ENCODE measurements at regions of chr13 and their contacts with region 1.

Region 1: GRCh38 chr13:101942038-101942437 is 459.8 kb downstream of the FGF14 start:
- DNase-seq: peak; percentile 43
- H3K4me3 ChIP-seq: no peak overlapping the region
- H3K27ac ChIP-seq: no peak overlapping the region
- H3K4me1 ChIP-seq: no peaks in the 10 kb centered on the region
- H3K27me3 ChIP-seq: no peaks in the 10 kb centered on the region
- CTCF ChIP-seq: peak; percentile 90 to 97

Region 2: GRCh38 chr13:101785858-101786257 is 156.2 kb before region 1 on chr13:
- CTCF ChIA-PET with region 1: no interaction called
- dilution Hi-C with region 1: no loop called
- in situ Hi-C with region 1: no loop called
- intact Hi-C with region 1: loop called (anchors 1 kb)
- DNase-seq: peak; percentile 32
- H3K4me3 ChIP-seq: no peak overlapping the region
- H3K27ac ChIP-seq: no peak overlapping the region
- H3K4me1 ChIP-seq: no peaks in the 10 kb centered on the region
- H3K27me3 ChIP-seq: no peaks in the 10 kb centered on the region
- CTCF ChIP-seq: peak; percentile 19 to 46

Region 3: DNA sequence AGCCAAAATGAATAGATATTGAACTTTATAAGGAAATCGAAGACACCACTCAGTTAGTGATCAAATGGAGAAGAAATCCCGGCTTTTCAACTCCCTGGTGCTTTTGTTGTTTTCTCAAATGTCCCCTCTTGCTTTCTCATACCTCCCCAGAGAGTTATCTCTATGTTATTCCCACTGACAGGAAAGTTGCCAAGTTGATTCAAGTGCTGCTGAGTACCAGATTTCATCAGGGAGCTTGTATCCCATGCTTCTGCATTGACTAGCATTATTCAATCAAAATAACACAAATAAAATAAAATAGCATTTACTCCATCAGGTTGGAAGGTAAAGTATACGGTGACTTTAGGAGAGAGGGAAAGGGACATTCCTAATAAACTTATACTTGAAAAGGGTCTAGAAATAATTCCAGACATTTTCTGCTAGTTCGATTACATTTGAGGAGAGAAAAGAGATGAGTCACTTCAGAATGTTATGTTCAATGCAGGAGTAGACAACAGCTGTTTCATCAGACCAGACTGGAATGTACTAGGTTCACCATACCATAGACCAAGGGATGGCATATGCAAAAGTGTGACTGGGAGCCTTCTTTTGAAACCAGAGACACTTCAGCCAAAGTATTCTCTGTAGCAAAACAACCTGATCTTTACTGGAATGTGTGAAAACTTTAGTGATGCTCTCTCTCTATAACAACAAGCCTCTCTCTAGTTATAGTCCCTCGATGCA is 62.0 kb after region 1 on chr13:
- CTCF ChIA-PET with region 1: no interaction called
- dilution Hi-C with region 1: no loop called
- in situ Hi-C with region 1: no loop called
- intact Hi-C with region 1: no loop called
- DNase-seq: no peak
- H3K4me3 ChIP-seq: no peak overlapping the region
- H3K27ac ChIP-seq: no peak overlapping the region
- H3K4me1 ChIP-seq: no peaks in the 10 kb centered on the region
- H3K27me3 ChIP-seq: no peaks in the 10 kb centered on the region
- CTCF ChIP-seq: no peak

Region 4: DNA sequence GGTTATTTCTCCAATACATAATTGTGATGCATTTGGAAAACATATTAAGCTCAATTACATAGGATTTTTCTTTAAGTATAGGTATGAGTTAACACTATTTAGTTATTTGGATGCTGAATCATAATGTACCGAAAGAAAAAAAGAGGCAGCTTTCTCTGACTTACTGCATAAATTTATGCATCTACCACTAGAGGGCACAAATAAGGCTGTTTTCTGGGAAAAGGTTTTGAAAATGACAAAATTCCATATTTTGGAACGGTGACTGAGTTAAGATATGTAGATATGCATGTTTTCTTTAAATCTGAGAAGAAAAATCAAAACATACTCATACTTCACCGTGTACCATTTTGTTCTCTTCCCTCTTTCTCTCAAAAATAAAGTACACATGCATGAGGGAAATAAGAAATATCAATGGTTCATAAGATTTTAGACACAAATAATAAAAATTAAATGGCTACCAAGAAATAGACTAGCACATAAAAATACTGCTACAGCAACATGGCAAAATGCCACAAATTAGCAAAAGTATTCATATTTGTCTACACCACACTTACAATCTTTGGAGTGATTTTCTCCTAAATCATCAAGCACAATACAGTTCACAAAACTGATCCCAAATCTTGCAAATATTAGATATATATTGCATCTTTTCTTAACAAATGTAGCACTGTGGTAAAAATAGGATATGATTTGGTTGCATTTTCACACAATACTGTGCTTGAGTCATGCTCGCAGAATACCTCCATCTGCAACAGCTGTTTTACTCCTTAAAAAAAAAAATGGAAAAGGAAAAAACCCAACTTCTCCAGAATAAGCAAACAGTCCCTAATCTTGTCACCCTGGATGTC is 199.8 kb after region 1 on chr13:
- CTCF ChIA-PET with region 1: no interaction called
- dilution Hi-C with region 1: no loop called
- in situ Hi-C with region 1: no loop called
- intact Hi-C with region 1: loop called (anchors 10 kb)
- DNase-seq: no peak
- H3K4me3 ChIP-seq: no peak overlapping the region
- H3K27ac ChIP-seq: no peak overlapping the region
- H3K4me1 ChIP-seq: no peaks in the 10 kb centered on the region
- H3K27me3 ChIP-seq: no peaks in the 10 kb centered on the region
- CTCF ChIP-seq: peak; percentile 79 to 91

Region 5: DNA sequence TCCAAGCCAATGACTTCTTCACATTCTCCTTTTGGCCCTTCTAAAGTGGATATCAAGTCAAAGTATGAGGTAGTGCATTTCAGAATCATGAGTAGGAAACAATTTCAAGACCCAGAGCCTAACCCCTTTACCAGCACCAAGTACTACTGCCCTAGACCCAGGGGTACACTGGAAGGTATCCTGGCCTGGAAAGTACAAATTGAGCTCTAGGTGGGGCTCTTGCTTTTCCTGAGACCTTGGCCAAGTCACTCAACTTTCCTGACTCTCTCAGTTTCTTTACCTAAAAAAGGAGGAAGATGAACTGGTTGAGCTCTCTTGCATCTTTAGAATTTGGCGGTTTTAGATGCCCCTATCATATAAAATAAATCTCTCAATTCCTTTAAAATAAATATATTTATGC is 255.2 kb after region 1 on chr13:
- CTCF ChIA-PET with region 1: no interaction called
- dilution Hi-C with region 1: no loop called
- in situ Hi-C with region 1: no loop called
- intact Hi-C with region 1: loop called (anchors 1 kb)
- DNase-seq: peak; percentile 30
- H3K4me3 ChIP-seq: no peak overlapping the region
- H3K27ac ChIP-seq: no peak overlapping the region
- H3K4me1 ChIP-seq: peaks cover 43% of the 10 kb centered on the region
- H3K27me3 ChIP-seq: no peaks in the 10 kb centered on the region
- CTCF ChIP-seq: peak; percentile 48 to 65

Region 6: GRCh38 chr13:102460801-102461200 is 518.8 kb after region 1 on chr13:
- CTCF ChIA-PET with region 1: no interaction called
- dilution Hi-C with region 1: no loop called
- in situ Hi-C with region 1: no loop called
- intact Hi-C with region 1: loop called (anchors 1 kb)
- DNase-seq: no peak
- H3K4me3 ChIP-seq: no peak overlapping the region
- H3K27ac ChIP-seq: no peak overlapping the region
- H3K4me1 ChIP-seq: no peaks in the 10 kb centered on the region
- H3K27me3 ChIP-seq: no peaks in the 10 kb centered on the region
- CTCF ChIP-seq: no peak

Region 7: DNA sequence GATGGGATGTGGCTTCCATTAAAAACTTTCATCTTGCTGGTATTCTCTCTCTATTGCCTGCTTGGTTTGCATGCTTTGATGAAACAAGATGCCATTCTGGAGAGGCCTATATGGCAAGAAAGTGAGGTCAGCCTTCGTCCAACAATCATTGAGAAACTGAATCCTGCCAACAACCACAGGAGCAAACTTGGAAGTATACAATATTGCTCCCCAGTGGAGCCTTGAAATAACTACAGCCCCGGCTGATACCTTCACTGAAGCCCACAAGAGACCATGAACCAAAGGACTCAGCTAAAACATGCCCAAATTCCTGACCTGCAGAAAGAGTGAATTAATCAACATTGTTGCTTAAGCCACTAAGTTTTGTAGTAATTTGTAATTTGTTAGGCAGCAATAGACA is 542.3 kb after region 1 on chr13:
- CTCF ChIA-PET with region 1: no interaction called
- dilution Hi-C with region 1: no loop called
- in situ Hi-C with region 1: loop called in 1 of 2 experiments (anchors 25 kb)
- intact Hi-C with region 1: no loop called
- DNase-seq: peak; percentile 17
- H3K4me3 ChIP-seq: no peak overlapping the region
- H3K27ac ChIP-seq: no peak overlapping the region
- H3K4me1 ChIP-seq: no peaks in the 10 kb centered on the region
- H3K27me3 ChIP-seq: no peaks in the 10 kb centered on the region
- CTCF ChIP-seq: peak; percentile 24 to 34

Region 8: DNA sequence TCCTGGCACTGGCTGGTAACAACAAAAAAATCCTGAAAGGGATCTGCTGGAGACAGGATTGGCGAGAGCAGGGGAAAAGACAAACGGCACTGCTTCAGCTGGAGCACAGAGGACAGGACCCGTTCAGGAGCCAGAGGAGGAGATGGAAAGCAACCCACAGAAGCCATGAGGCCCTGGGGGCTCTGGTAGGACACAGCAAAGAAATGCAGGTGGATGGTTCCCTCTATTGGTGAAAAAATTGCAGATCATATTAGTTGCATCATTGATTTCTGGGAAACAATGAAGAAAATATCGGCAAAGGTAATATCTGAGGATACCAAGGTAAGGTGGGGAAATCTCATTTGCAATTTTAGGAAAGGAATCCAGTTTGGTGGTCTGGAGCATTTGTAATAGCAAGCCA is 629.0 kb after region 1 on chr13:
- CTCF ChIA-PET with region 1: no interaction called
- dilution Hi-C with region 1: no loop called
- in situ Hi-C with region 1: no loop called
- intact Hi-C with region 1: loop called (anchors 5 kb)
- DNase-seq: no peak
- H3K4me3 ChIP-seq: no peak overlapping the region
- H3K27ac ChIP-seq: no peak overlapping the region
- H3K4me1 ChIP-seq: no peaks in the 10 kb centered on the region
- H3K27me3 ChIP-seq: no peaks in the 10 kb centered on the region
- CTCF ChIP-seq: peak; percentile 7 to 32

Measured in mammary epithelial cell (primary cell).